ENCODE measurements at regions of chr3 and their contacts with region 1.

Region 1: DNA sequence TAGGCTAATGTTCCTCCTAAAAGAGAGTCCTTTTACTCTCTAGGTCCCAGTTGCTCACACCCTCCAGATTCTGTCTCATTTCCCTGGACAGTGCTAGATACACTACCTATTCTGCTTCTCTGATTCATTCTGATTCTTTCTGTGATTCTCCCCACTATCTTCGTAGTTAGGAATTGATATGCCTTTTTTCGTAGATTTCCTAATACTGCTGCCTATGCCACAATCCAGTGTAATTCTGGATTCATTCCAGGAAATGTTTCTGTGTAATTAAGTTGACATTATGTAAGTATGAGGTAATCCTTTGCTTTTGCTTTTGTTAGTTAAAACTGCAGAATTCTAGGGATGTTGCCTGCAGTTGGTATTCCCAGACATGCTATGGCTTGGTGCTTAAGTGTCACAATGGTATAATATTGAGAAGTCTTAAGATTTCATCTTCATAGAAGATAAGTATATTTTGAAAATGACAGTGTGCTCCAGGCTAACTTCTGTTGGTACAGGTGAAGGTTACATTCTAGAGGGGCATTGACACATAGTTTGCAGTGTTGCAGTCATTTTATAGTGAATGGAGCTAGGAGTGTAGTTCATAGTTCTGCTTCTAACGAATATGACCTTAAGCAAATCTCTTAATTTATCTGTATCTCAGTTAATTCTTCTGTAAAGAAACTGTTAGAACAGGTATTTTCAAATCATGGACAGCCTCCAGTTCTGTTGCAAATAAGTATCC is 54.3 kb downstream of the RIOX2 start:
- DNase-seq: no peak
- H3K4me3 ChIP-seq: no peak overlapping the region
- H3K27ac ChIP-seq: no peak overlapping the region
- H3K4me1 ChIP-seq: peaks cover 2% of the 10 kb centered on the region
- H3K27me3 ChIP-seq: no peaks in the 10 kb centered on the region
- CTCF ChIP-seq: no peak
- POLR2A ChIP-seq: no peak

Region 2: GRCh38 chr3:97901313-97902248 is 16.4 kb before region 1 on chr3:
- CTCF ChIA-PET with region 1: no interaction called
- POLR2A ChIA-PET with region 1: no interaction called
- dilution Hi-C with region 1: no loop called
- intact Hi-C with region 1: loop called (anchors 2 kb)
- DNase-seq: peak; percentile 29
- H3K4me3 ChIP-seq: no peak overlapping the region
- H3K27ac ChIP-seq: no peak overlapping the region
- H3K4me1 ChIP-seq: no peaks in the 10 kb centered on the region
- H3K27me3 ChIP-seq: no peaks in the 10 kb centered on the region
- CTCF ChIP-seq: no peak
- POLR2A ChIP-seq: no peak

Region 3: DNA sequence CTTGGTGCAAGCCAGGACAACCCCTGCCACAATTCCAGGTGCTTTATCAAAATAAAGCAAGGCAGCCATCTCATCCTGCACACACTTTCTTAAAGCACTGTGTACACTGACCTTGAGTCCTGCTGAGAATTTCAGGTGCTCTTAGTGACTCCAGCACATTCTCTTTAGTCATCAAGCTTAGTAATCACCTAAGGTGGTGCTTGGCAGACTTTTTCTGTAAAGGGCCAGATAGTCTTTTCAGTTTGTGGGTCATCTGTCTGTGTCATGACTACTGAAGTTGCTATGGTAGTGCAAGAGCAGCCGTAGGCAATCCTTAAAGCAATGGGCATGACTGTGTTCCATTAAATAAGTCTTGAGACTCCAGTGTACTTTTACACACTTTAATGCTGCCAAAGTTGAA is 17.9 kb after region 1 on chr3:
- CTCF ChIA-PET with region 1: no interaction called
- POLR2A ChIA-PET with region 1: no interaction called
- dilution Hi-C with region 1: no loop called
- intact Hi-C with region 1: no loop called
- DNase-seq: no peak
- H3K4me3 ChIP-seq: no peak overlapping the region
- H3K27ac ChIP-seq: no peak overlapping the region
- H3K4me1 ChIP-seq: no peaks in the 10 kb centered on the region
- H3K27me3 ChIP-seq: no peaks in the 10 kb centered on the region
- CTCF ChIP-seq: no peak
- POLR2A ChIP-seq: no peak